ENCODE measurements at regions of chr7 and their contacts with region 1.

Region 1: GRCh38 chr7:137656227-137656849 is 190.4 kb downstream of the DGKI start:
- ATAC-seq: peak in 7 of 8 experiments; percentile 53 to 77 (median 69)
- H3K4me3 ChIP-seq: no peak overlapping the region
- H3K27ac ChIP-seq: no peak overlapping the region
- H3K4me1 ChIP-seq: peaks cover 4 to 14% of the 10 kb centered on the region in 2 donors

Region 2: DNA sequence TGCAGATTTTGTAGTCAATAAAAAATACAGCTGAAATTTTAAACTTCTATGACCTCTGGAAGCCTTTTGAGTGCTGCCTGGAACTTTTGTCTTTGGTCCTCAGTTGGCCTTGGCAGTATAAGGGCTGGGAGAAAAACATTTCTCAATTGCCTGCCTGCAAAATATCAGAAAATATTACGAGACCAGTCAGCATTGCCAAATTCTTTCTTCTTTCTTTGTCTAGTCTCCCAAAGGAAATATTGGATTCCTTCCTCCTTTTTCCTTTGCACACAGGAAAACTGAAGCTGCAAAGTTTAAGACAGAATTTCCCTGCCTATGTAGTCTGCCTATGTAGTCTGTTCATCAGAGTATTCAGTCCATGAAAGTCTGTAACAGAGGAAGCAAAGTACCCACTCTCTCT is 692.0 kb before region 1 on chr7:
- in situ Hi-C with region 1: no loop called
- ATAC-seq: no peak
- H3K4me3 ChIP-seq: no peak overlapping the region
- H3K27ac ChIP-seq: no peak overlapping the region
- H3K4me1 ChIP-seq: no peaks in the 10 kb centered on the region

Region 3: GRCh38 chr7:137820677-137821420 is 164.5 kb after region 1 on chr7:
- in situ Hi-C with region 1: loop called in 1 of 9 experiments (anchors 25 kb)
- ATAC-seq: peak; percentile 72 to 96 (median 86)
- H3K4me3 ChIP-seq: no peak overlapping the region
- H3K27ac ChIP-seq: peak overlapping the region; percentile 36 to 60
- H3K4me1 ChIP-seq: peaks cover 13 to 34% of the 10 kb centered on the region in 2 donors

Region 4: DNA sequence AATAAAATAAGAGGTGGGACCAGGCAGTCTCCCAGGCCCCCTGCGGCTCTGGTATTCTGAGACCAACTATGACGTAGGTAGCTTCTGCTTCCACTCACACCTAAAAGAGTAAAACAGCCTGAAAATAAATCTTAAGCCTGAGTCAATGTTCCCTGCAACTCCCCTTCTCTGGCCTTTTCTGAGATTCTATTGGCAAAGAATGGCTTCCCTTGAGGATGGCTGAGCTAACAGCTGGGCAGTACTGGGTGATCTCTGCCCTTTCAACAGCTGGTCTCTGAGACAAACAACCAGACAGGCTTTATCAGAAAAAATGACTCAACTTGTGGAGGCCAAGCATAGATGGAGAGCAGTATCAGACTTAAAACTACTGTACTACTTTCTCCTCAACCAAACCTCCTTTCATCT is 286.8 kb after region 1 on chr7:
- in situ Hi-C with region 1: no loop called
- ATAC-seq: peak in 1 of 8 experiments; percentile 28
- H3K4me3 ChIP-seq: no peak overlapping the region
- H3K27ac ChIP-seq: no peak overlapping the region
- H3K4me1 ChIP-seq: peaks cover 0 to 2% of the 10 kb centered on the region in 2 donors

Region 5: DNA sequence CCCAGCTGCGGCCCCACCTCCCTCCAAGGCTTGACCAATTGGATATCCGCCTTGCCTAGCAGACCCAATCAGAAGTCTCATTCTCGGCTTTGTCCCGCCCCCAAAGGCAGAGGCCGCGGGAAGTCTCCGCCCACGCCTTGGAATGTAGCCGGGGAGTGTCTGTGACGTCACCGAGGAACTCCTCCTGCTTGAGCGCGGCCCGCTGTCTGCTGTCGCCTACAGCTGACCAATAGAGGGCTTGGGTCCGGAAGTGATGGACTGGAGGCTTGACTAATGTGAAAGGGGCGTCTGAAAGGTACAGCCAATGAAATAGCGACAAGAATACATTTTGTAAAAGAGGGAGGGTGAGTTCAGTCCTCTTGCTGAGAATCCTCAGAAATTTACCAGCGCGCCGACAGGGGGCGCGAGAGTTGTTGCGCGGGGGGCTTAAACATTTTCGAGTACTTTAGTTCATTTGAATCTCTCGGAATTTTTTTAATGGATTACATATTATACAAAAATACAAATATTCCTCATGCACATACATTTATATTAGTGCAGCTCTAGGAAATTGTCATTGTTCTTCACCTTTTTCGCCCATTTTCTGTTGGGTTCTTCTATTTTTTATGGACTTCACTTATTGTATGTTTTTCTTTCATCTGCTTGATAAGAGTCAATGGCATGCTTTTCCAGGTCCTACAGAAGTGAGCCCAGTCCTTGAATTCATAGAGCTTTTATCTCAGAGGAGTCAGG is 345.9 kb after region 1 on chr7:
- in situ Hi-C with region 1: loop called in 4 of 9 experiments (anchors 25 kb)
- ATAC-seq: peak; percentile 86 to 94 (median 93)
- H3K4me3 ChIP-seq: peak overlapping the region; percentile 50 to 68 (median 61)
- H3K27ac ChIP-seq: no peak overlapping the region
- H3K4me1 ChIP-seq: peaks cover 14 to 18% of the 10 kb centered on the region in 2 donors

Measured in motor neuron (in vitro differentiated cells).